Common myeloid progenitor, CD34-positive (primary cell): ENCODE measurements at regions of chr2 and their contacts with region 1.

Region 1: GRCh38 chr2:66429071-66429477 is 5.9 kb upstream of the MEIS1 start:
- DNase-seq: peak; percentile 81 to 90 (median 89)
- H3K4me3 ChIP-seq: peak overlapping the region in 1 of 7 experiments; percentile 19
- H3K27ac ChIP-seq: no peak overlapping the region
- H3K4me1 ChIP-seq: peaks cover 0 to 69% (median 32%) of the 10 kb centered on the region in 4 experiments
- H3K27me3 ChIP-seq: peaks cover 0 to 22% (median 12%) of the 10 kb centered on the region in 5 experiments

Region 2: DNA sequence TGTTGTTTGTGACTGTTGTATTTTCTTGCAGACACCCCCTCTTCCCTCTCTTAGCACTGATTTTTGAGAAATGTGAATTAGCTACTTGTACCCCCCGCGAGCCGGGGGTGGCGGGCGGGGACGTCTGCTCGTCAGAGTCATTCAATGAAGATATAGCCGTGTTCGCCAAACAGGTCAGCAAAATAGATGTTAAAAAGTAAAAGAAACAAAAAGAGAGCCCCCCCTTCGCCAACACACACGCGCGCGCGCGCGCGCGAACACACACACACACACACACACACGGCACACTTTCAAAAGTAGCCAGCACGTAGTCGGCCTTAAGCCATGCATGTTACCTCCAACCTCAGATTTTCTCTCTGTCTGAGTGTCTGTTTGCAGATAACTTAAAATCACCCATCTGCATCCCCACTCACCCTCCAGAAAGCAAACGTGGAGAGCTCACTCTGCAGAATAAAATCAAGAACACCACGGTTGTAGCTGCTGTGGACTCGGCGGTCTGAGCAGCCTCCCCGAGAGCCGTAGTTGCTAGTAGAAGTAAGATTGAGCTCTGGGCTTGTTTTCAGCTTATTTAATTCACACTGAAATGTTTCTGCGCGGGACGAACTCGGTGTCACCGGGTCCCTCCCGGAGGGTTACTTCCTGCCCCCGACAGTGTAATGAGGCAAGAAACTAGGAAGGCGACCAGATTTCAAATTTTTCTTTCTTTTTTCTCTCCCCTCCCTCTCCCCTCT is 10.9 kb after region 1 on chr2:
- CTCF ChIA-PET with region 1: interaction called, 67 read pairs
- POLR2A ChIA-PET with region 1: interaction called, 28 read pairs
- DNase-seq: peak in 1 of 3 donors; percentile 51
- H3K4me3 ChIP-seq: peak overlapping the region; percentile 50 to 97 (median 92)
- H3K27ac ChIP-seq: peak overlapping the region; percentile 78 to 90
- H3K4me1 ChIP-seq: peaks cover 38 to 82% (median 49%) of the 10 kb centered on the region in 4 experiments
- H3K27me3 ChIP-seq: no peaks in the 10 kb centered on the region

Region 3: GRCh38 chr2:66574701-66575624 is 145.9 kb after region 1 on chr2:
- CTCF ChIA-PET with region 1: interaction called, 185 read pairs
- POLR2A ChIA-PET with region 1: interaction called, 22 read pairs
- DNase-seq: peak; percentile 91 to 97 (median 95)
- H3K4me3 ChIP-seq: peak overlapping the region; percentile 54 to 97 (median 86)
- H3K27ac ChIP-seq: peak overlapping the region; percentile 87 to 97
- H3K4me1 ChIP-seq: peaks cover under 1 to 70% (median 54%) of the 10 kb centered on the region in 4 experiments
- H3K27me3 ChIP-seq: peaks cover 0 to 16% (median 0%) of the 10 kb centered on the region in 5 experiments

Region 4: GRCh38 chr2:67215214-67216055 is 786.4 kb after region 1 on chr2:
- CTCF ChIA-PET with region 1: interaction called, 12 read pairs
- POLR2A ChIA-PET with region 1: no interaction called
- DNase-seq: peak; percentile 57 to 70 (median 68)
- H3K4me3 ChIP-seq: no peak overlapping the region
- H3K27ac ChIP-seq: no peak overlapping the region
- H3K4me1 ChIP-seq: peaks cover 0 to 3% (median 0%) of the 10 kb centered on the region in 4 experiments
- H3K27me3 ChIP-seq: no peaks in the 10 kb centered on the region

Region 5: DNA sequence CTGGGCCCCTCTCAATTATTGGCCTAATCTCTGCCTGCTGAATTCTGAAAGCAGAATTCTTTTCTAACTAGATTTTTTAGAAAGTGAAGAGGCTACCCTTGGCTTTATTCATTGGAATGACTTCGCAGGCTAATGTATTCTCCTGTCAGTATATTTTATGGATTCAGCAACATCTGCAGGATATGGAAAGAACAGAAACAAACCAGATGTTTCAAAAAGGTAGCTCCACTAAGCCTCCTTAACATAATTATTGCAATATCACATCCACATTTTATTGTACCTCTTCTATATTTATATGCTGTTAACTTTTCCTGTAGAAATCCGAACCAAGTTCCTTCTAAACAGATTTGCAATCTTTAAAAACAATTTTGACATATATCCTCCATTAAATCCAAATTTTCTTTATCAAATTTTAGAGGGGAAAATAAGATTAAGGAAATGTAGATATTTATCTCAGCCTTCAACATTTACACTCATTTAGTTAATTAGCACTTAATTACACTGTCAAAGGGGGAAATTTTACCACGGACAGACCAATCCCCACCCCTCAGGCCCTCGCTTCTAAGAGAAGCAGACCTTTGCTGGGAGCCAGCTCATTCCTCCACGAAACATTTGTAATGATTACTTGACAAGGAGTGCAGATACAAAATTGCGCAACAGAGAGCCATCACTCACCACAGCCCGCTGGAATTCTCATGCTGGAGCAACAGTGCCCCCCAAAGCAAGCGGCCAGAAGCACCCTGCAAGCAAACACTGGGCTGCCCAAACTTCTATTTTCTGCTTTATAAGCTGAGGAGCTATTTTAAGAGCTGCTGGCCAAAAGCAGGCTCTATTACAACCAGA is 1221.4 kb after region 1 on chr2:
- CTCF ChIA-PET with region 1: interaction called, 11 read pairs
- POLR2A ChIA-PET with region 1: interaction called, 3 read pairs
- DNase-seq: peak; percentile 83 to 90 (median 89)
- H3K4me3 ChIP-seq: peak overlapping the region in 1 of 7 experiments; percentile 48
- H3K27ac ChIP-seq: no peak overlapping the region
- H3K4me1 ChIP-seq: peaks cover 3 to 18% (median 4%) of the 10 kb centered on the region in 4 experiments
- H3K27me3 ChIP-seq: no peaks in the 10 kb centered on the region